ENCODE measurements at regions of chr16 and their contacts with region 1.

Region 1: DNA sequence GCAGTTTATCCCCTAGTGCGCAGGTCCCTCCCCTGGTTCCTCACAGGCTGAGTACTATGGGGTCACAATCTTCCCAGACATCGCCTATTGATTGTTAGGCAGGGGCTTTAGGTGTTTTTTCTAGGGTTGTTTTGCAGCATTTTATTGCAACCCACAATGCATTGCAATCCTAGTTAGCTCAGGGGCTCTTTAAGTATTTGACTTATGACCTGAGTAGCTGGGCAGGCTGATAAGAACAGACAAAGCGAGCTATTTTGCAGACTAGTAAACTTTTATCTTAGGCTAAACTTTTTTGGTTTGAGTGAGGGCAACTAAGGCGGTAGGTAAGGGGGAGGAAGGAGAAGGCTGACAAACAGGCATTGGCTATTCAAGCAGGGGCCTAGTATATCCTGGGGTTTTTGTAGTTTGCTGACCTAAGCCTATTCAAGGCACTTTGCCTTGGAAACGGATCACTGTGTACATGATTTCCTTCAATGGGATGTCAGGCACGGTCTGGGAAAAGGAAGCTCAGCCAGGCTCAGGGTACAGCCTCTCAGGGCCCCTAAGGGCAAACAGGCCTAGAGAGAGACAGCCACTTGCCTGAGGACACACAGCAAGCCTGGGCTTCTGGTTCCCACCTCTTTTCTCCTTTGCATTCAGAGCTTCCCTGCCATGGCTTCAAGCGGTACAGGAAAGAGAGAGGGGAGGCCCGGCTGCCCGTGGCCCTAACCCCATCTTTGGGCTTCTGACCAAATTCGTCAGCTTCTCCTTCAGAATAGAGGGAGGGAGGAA is 6.4 kb downstream of the DRC7 start:
- DNase-seq: no peak
- ATAC-seq: no peak
- H3K4me3 ChIP-seq: no peak overlapping the region
- H3K27ac ChIP-seq: no peak overlapping the region
- H3K4me1 ChIP-seq: no peaks in the 10 kb centered on the region
- H3K27me3 ChIP-seq: no peaks in the 10 kb centered on the region
- CTCF ChIP-seq: no peak
- POLR2A ChIP-seq: no peak

Region 2: GRCh38 chr16:57591086-57591869 is 109.7 kb before region 1 on chr16:
- intact Hi-C with region 1: no loop called
- DNase-seq: peak; percentile 70 to 81 (median 71)
- ATAC-seq: peak; percentile 90 to 97 (median 94)
- H3K4me3 ChIP-seq: no peak overlapping the region
- H3K27ac ChIP-seq: peak overlapping the region in 1 of 12 donors; percentile 3
- H3K4me1 ChIP-seq: peaks cover 0 to 25% (median 6%) of the 10 kb centered on the region in 12 donors
- H3K27me3 ChIP-seq: peaks cover 0 to 7% (median 0%) of the 10 kb centered on the region in 9 donors
- CTCF ChIP-seq: peak; percentile 83 to 95 (median 88)
- POLR2A ChIP-seq: no peak

Region 3: DNA sequence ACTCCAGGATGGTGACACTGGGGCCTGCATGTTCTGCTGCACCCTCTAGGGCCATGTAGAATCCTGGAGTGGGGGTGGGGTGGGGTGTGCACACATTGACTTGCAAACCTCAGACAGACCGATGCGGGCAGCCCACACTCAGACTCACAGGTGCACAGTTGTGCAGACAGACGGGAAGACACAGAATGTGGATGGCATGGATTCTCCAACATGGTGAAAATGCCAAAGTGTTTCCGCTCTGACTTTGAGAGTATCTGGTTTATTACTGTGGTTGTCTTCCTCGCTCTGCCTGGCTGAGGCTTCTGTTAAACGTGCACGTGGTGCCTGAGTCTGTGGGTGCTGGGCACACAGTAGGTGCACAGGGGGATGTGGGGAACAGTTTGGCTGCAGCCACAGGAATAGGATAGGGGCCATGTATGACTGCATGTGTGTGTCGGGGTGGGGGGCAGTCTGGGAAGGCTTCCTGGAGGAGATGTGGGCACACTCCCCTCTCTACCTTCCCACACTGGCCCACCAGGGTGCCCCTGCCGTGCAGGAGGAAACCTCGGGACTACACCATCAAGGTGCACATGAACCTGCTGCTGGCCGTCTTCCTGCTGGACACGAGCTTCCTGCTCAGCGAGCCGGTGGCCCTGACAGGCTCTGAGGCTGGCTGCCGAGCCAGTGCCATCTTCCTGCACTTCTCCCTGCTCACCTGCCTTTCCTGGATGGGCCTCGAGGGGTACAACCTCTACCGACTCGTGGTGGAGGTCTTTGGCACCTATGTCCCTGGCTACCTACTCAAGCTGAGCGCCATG is 41.9 kb before region 1 on chr16:
- intact Hi-C with region 1: loop called in 2 of 10 experiments (anchors 5 kb)
- DNase-seq: no peak
- ATAC-seq: no peak
- H3K4me3 ChIP-seq: no peak overlapping the region
- H3K27ac ChIP-seq: no peak overlapping the region
- H3K4me1 ChIP-seq: no peaks in the 10 kb centered on the region
- H3K27me3 ChIP-seq: no peaks in the 10 kb centered on the region
- CTCF ChIP-seq: no peak
- POLR2A ChIP-seq: no peak

Region 4: GRCh38 chr16:57663917-57664661 is 36.9 kb before region 1 on chr16:
- intact Hi-C with region 1: loop called in 2 of 10 experiments (anchors 5 kb)
- DNase-seq: no peak
- ATAC-seq: no peak
- H3K4me3 ChIP-seq: no peak overlapping the region
- H3K27ac ChIP-seq: peak overlapping the region in 1 of 12 donors; percentile 23
- H3K4me1 ChIP-seq: peaks cover 0 to 17% (median 0%) of the 10 kb centered on the region in 12 donors
- H3K27me3 ChIP-seq: no peaks in the 10 kb centered on the region
- CTCF ChIP-seq: peak in 1 of 12 donors; percentile 5
- POLR2A ChIP-seq: no peak

Region 5: GRCh38 chr16:58020628-58021139 is 319.7 kb after region 1 on chr16:
- intact Hi-C with region 1: no loop called
- DNase-seq: peak in 4 of 5 donors; percentile 45 to 70 (median 68)
- ATAC-seq: peak in 1 of 4 donors; percentile 23
- H3K4me3 ChIP-seq: no peak overlapping the region
- H3K27ac ChIP-seq: no peak overlapping the region
- H3K4me1 ChIP-seq: peaks cover 14 to 57% (median 35%) of the 10 kb centered on the region in 12 donors
- H3K27me3 ChIP-seq: peaks cover 0 to 3% (median 0%) of the 10 kb centered on the region in 9 donors
- CTCF ChIP-seq: peak; percentile 58 to 90 (median 80)
- POLR2A ChIP-seq: no peak

Region 6: DNA sequence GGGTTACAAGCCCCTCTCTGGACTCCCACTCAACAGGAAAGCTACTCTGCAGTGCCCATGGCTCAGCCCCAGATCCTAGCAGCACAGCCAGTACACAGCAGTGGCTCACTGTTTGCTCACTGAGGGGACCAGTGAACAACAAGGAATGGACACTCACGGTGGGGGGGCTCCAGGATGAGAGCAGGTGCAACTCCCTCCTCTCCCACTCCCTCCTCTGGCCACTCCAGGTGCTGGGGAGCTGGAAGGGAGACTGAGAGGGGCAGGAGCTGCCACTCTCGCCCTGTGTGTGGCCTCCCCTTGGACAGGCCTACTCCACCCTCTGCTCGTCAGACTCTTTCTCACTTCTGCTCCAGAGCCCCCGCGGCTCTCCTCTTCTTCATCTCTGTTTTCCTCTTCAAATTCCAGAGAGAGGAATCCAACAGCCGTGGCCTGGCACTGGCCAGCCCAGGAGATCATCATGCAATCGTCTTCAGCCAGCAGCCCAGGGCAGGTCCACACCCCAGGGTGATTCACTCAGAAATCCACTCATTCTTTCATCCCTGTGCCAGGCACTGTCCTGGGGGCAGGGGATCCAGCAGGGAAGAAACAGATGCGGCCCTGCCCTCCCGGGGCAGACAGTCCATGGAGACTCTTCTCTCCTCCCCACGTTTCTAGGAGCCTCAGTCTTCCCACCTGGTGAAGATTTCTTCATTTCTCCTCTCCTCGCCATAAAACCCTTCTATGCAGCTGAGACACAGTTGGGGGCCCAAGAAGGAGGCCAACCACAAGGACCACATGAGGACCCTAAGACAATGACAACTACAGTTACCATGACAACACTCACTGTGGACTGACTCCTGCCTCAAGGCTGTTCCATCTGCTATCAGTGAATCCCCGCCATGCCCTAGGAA is 397.5 kb after region 1 on chr16:
- intact Hi-C with region 1: no loop called
- DNase-seq: no peak
- ATAC-seq: no peak
- H3K4me3 ChIP-seq: no peak overlapping the region
- H3K27ac ChIP-seq: no peak overlapping the region
- H3K4me1 ChIP-seq: peaks cover 0 to 46% (median 17%) of the 10 kb centered on the region in 12 donors
- H3K27me3 ChIP-seq: no peaks in the 10 kb centered on the region
- CTCF ChIP-seq: no peak
- POLR2A ChIP-seq: no peak